HEK293T (cell line): ENCODE measurements at regions of chr16 and their contacts with region 1.

Region 1: DNA sequence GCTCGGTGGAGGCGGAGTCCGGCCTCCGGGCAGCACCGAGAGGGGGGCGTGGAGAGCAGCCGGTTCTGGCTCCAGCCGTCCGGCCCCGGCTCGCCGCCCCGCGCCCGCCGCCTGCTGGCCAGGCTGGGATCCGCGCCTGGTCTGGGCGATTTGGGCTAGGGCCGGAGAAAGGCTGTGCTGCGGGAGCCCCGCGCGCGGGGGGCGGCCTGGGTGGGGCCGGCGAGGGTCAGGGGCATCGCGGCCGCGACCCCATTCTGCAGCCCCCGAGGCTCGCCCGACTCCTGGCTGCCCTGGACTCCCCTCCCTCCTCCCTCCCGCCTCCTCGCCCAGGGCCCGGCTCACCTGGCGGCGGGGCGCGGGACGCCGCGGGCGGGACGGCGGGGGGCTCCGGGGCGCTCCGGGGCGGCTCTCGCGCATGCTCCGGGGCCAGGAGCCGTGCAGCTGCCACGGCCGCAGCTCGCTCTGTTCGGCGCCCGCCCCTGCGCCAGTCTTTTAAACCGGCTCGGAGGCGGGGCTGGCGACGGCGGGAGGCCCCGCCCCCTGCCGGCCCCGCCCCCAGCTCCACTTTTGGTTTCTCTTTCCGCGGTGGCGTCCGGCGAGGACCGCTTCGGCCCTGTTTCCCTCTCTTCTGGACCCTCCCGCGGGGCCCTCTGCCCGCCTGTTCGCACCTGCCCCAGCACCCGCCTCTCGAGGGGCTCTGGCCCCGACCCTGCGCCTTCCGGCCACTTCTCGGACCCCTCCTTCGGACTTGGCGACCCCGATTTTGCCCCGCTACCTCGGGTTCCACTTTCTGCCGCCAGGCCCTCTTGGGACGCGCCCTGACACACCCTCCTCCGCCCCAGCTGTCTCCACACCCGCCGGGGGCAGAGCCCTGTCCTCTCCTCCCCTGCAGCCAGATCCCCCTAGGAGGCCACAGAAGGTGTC is at the start of gene SOCS1:
- DNase-seq: peak; percentile 85

Region 2: GRCh38 chr16:10964039-10964890 is 291.7 kb before region 1 on chr16:
- CTCF ChIA-PET with region 1: interaction called, 11 read pairs
- POLR2A ChIA-PET with region 1: interaction called, 7 read pairs
- DNase-seq: peak; percentile 83

Region 3: DNA sequence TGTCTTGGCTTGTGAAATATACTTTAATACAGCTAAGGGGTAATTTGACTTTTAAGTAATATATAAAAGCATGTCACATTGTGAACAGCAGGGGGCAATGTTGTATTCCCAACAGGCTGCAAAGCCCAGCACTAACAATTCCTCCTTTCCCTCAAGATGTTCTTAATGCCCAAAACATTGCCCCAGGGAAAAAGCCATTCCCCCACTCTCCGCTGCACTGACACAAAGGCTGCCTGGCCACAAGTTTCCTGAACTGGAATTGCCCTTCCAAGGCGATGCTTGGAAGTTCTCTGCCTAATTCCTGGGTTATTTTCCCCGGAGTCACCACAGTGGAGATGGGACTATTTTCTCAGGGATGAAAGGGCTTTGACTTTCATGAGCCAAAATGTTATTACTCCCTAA is 284.4 kb before region 1 on chr16:
- CTCF ChIA-PET with region 1: interaction called, 5 read pairs
- POLR2A ChIA-PET with region 1: interaction called, 12 read pairs
- DNase-seq: peak; percentile 71

Region 4: GRCh38 chr16:11114366-11115164 is 141.4 kb before region 1 on chr16:
- CTCF ChIA-PET with region 1: no interaction called
- POLR2A ChIA-PET with region 1: no interaction called
- DNase-seq: no peak

Region 5: DNA sequence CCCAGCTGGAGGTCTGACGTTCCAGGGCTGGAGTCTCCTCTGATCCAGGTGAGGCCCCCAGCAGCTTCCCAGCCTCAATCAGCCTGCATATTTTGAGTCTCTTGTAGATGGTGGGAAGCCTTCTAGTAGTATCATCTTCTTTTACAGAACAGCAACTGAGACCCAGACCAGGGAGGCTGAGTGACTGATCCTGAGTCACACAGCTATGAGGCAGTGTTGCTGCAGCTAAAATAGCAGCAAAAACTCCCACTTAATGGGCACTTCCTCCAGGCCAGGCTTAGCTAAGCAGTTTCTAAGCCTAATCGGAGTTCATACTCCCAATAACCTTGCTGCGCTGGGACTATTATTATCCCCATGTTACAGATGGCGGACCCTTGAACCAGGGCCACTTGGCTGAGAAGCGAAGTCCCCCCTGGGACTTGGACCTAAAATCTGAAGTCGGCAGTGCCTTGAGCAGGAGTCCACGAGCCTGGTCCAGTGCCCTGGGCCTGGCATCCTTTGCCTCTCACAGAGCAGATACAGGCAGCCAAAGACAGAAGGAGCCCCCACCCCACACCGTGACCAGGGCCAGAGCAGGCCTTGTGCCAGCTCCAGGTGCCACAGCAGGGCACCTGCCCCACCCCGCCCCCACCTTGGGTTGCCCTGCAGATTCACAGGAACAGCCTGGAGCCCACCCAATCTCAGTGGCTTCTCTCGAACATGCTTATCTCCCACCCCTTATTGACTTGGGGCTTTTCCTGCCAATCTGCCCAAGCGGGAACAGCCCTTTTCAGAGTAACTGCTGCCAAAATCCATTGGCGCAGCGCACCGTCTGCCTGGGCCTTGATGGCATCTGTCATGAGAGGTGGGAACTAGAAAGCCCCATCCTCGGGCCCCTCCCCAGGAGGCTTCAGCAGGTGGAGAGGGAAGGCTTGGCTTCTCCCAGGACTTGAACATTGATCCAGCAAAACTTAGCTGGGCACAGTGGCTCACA is 65.1 kb before region 1 on chr16:
- CTCF ChIA-PET with region 1: no interaction called
- POLR2A ChIA-PET with region 1: no interaction called
- DNase-seq: no peak

Region 6: GRCh38 chr16:11236461-11237254 is 19.3 kb before region 1 on chr16:
- CTCF ChIA-PET with region 1: no interaction called
- POLR2A ChIA-PET with region 1: no interaction called
- DNase-seq: no peak

Region 7: DNA sequence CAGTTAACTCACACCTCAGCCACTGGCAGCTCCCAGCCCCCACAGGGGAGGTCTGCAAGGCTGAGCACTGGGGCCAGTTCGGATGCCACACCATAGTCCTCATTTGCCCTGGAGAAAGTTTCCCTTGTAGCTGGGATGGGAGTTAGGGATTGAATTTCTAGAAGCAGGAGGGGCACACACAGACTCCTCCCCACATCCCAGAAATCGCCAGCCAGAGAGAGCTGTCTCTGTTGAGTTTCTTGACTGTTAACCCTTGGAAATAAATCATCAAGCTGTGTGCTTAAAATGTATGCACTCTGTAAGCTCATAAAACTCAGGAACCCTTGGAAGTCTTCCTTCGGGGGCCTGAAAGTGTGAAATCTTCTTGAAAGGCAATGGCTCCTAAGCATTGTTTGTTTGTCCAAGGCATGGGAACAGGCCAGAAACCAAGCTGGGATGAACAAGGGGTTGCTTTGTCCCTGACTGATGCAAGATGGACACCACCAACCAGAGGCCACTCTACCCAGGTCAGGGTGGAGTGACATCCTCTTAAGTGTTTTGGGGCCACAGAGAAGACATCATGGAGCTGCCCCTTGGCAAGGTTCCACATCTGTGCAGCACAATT is 17.8 kb after region 1 on chr16:
- CTCF ChIA-PET with region 1: interaction called, 3 read pairs
- POLR2A ChIA-PET with region 1: interaction called, 16 read pairs
- DNase-seq: no peak